Common myeloid progenitor, CD34-positive (primary cell): ENCODE measurements at regions of chr5 and their contacts with region 1.

Region 1: DNA sequence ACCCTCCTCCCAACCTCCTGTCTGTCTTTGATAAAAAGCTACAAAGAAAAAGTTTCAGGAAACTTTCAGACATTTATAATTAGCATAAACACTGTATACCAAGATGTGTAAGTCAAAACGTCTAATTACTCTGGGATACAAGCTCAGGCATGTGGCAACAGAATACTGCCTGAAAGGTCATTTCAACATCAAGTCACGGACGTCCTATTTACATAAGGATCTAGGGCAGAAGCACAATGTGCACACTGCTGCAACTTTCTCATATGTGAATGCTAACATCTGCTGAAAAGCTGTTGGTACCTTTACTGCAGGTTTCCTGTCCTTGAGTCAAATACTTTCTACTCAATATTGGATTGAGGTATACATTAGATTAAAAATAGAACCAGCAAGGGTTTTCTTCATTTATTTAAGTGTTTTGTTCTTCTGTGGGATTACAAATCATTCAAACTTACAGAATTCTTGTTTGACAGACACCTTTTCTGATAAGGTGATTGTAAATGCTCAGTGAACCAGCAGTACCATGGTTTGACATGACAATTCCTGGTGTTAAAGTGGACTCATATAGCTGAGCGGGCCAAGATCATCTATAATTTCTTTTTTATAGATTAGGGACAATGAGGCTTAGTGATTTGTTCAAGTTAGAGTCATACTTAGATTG is 36.8 kb downstream of the ELL2 start:
- DNase-seq: no peak
- H3K4me3 ChIP-seq: peak overlapping the region in 1 of 7 experiments; percentile 8
- H3K27ac ChIP-seq: no peak overlapping the region
- H3K4me1 ChIP-seq: peaks cover 4 to 31% (median 16%) of the 10 kb centered on the region in 4 experiments
- H3K27me3 ChIP-seq: no peaks in the 10 kb centered on the region

Region 2: DNA sequence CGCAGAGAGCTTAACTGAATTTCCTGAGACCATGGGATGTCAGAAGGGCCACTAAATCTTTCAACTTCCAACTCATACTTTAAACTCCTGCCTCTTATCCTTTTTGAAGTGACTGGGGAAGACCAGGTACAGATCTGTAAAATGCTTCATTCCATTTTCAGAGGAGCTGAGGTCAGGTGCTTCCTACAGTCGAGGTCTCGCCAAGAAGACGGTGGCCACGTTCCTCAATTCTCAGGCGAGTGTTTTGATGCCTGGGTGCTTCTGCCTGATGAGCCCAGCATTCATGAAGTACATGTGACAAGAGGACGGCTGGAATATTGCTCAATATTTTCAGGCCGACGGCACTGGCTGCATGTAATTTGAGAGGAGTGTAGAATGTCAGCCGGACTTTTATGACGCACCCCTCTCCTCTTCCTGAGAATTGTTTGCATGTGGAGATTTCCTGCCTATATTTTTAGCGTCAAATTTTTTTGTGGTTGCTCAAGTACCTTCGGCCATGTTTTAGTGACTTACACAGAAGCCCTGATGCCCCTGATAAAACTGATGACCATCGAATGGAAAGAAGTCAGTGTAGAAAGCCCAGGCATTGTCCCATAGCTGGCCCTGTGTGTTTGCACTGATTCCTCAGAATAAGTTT is 63.5 kb before region 1 on chr5:
- CTCF ChIA-PET with region 1: no interaction called
- POLR2A ChIA-PET with region 1: no interaction called
- DNase-seq: peak in 2 of 3 donors; percentile 53 to 66
- H3K4me3 ChIP-seq: peak overlapping the region in 2 of 7 experiments; percentile 27 to 51
- H3K27ac ChIP-seq: no peak overlapping the region
- H3K4me1 ChIP-seq: peaks cover 6 to 28% (median 17%) of the 10 kb centered on the region in 4 experiments
- H3K27me3 ChIP-seq: no peaks in the 10 kb centered on the region

Region 3: DNA sequence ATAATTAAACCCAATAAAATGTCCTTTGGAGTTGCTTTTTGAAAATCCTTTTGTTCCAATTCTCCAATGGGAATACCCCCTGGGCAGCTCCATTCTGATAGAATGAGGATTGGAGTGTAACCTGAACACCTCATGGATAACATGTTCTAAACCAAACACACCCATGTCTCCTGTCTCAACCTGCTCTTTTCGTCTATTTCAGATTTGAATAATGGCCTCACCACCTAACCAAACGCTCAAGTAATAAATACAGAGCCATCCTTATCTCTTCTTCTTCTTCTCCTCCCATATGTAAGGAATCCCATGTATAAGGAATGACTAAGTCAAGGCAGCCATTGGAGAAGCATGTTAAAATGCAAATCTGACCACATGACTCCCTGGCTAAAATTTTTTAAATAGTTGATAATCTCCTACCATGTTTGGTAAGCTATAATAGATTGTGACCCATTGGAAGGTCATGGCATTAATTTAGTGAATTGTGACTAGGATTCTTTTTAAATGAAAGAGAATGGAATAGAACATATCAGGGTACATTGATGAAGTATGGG is 10.8 kb after region 1 on chr5:
- CTCF ChIA-PET with region 1: interaction called, 11 read pairs
- POLR2A ChIA-PET with region 1: no interaction called
- DNase-seq: no peak
- H3K4me3 ChIP-seq: no peak overlapping the region
- H3K27ac ChIP-seq: no peak overlapping the region
- H3K4me1 ChIP-seq: peaks cover 0 to 2% (median 0%) of the 10 kb centered on the region in 4 experiments
- H3K27me3 ChIP-seq: no peaks in the 10 kb centered on the region